Activated CD4-positive, alpha-beta T cell treated with anti-CD3 and anti-CD28 coated beads, Interleukin-2, amount 10 ng/mL, durations not matched to agents 24 days and 14 days (primary cell): ENCODE measurements at regions of chr20 and their contacts with region 1.

Region 1: GRCh38 chr20:5126512-5127203 is at the start of gene CDS2:
- DNase-seq: peak; percentile 100
- H3K4me3 Mint-ChIP-seq: peak within 1 kb of the TSS; percentile 95
- H3K27ac Mint-ChIP-seq: peak within 1 kb of the TSS; percentile 98
- H3K4me1 Mint-ChIP-seq: peaks cover 46% of the 10 kb centered on the region
- H3K27me3 Mint-ChIP-seq: no peaks in the 10 kb centered on the region
- total RNA-seq, gene CDS2: 34.7 and 39.2 TPM in 2 replicates

Region 2: GRCh38 chr20:4813863-4814695 is 312.6 kb before region 1 on chr20:
- intact Hi-C with region 1: loop called (anchors 5 kb)
- DNase-seq: peak; percentile 93
- H3K4me3 Mint-ChIP-seq: peak overlapping the region; percentile 87
- H3K27ac Mint-ChIP-seq: peak overlapping the region; percentile 96
- H3K4me1 Mint-ChIP-seq: peaks cover 69% of the 10 kb centered on the region
- H3K27me3 Mint-ChIP-seq: no peaks in the 10 kb centered on the region

Region 3: GRCh38 chr20:5191829-5192569 is 65.3 kb after region 1 on chr20:
- intact Hi-C with region 1: loop called (anchors 1 kb)
- DNase-seq: peak; percentile 80
- H3K4me3 Mint-ChIP-seq: no peak overlapping the region
- H3K27ac Mint-ChIP-seq: peak overlapping the region; percentile 70
- H3K4me1 Mint-ChIP-seq: peaks cover 13% of the 10 kb centered on the region
- H3K27me3 Mint-ChIP-seq: no peaks in the 10 kb centered on the region

Region 4: DNA sequence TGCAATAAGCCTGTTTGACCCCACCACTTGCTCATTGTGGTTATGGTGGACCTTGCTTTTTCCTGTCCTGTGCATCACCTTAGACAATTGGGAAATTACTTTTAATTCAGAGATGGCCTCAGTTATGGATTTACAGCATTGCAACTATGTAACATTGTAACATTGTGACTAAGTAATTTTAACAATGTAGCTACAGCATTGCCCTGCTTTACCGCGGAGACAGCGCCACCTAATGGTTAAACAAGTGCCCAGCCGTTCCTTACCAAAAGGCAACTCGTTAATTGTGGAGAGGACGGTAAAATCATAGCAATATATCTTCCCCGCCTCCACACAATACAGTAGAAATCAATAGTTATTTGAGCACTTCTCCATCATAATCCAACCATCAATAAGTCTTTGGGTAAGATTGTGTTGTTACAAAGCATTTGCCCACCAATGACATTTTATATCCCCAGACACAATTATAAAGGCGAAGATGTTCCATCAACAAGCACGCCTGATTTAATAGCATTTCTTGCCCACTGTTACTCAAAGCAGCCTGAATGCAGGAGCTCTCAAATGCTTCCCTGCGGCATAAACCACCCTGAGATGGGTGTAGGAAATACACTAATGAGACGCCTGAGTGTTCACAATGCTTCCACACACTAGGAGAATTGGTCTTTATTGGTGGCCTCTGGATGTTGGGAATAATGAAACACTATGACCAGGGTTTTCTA is 96.4 kb after region 1 on chr20:
- intact Hi-C with region 1: loop called (anchors 1 kb)
- DNase-seq: peak; percentile 87
- H3K4me3 Mint-ChIP-seq: no peak overlapping the region
- H3K27ac Mint-ChIP-seq: no peak overlapping the region
- H3K4me1 Mint-ChIP-seq: peaks cover 3% of the 10 kb centered on the region
- H3K27me3 Mint-ChIP-seq: no peaks in the 10 kb centered on the region

Region 5: DNA sequence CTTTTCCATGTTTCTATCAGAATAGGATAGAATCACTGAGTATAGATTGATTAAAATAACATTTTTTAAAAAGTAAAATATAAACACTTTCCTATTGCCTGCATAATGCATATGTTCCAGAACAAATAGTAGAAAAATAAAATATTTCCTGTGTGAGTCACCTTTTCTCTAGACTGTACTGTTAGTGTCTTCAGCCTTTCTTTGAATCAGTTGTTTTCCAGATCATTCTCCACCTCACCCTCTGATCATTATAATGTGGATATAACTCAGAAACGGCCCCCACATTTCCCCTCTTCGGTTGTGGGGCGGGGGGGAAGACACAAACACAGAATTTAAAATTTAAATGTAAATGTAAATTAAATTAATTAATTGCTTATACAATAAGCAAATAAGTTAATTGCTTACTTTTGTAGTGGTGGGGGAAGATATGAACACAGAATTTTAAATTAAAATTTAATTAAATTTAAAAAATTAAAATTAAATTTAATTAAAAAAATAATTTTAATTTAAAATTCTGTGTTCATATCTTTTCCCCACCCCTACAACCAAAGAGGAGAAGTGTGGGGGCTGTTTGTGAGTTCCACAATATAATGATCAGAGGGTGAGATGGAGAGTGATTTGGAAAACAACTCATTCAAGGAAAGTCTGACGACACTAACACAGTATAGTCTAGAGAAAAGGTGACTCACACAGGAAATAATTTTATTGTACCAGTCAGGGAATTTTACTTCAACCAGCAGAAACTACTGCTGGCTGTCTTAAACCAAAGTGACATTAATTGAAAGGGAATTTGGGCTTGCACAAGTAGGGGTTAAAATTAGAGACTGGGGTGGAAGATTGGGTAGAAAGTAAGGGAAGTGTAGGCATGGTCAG is 227.2 kb after region 1 on chr20:
- intact Hi-C with region 1: loop called (anchors 10 kb)
- DNase-seq: no peak
- H3K4me3 Mint-ChIP-seq: no peak overlapping the region
- H3K27ac Mint-ChIP-seq: peak overlapping the region; percentile 59
- H3K4me1 Mint-ChIP-seq: peaks cover 16% of the 10 kb centered on the region
- H3K27me3 Mint-ChIP-seq: no peaks in the 10 kb centered on the region